ENCODE measurements at regions of chr3 and their contacts with region 1.

Region 1: DNA sequence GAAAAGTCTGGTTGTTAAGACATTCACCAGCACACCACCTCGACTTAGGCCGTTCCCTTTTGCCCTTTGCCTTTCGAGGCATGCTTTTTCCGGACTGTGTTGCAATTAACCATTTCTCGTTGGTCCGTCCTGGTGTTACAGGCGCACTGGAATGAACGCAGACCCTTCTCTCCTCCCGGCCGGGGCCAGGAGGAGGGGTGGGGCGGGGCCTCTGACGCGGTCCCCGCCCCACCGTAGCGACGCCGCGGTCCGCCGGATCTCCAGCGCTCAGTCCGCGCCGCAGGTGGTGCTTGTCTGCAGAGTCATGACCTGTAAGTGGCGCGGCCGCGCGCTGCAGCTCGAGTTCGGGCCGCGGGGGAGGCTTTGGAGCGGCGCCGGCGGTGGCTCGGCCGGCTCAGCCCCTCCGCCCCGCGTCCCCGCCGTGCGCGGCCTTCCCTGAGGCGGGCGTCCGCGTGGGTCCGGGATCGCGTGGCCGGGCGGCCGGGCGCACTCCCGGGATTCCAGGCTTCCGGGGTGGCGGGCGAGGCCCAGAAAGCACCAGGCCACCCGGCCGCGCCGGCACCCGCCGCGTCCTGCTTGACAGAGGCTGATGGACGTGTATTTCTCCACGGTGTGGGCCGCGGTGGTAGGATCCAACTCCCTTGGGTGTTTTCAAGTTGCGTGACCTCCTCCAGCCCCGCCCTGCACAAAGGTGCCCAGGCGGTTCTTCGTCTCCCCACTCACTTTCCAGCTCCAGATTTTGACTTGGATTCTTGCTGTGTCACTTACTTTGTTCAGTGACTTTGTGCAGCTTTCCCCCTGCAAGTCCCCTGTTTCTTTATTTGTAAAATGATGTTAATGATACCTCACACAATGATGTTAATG is at the start of gene NIT2:
- DNase-seq: peak; percentile 85
- ATAC-seq: peak; percentile 95
- H3K4me3 ChIP-seq: peak within 1 kb of the TSS; percentile 70 to 82 (median 78)
- H3K27ac ChIP-seq: peak within 1 kb of the TSS; percentile 79
- H3K4me1 ChIP-seq: peaks cover 50% of the 10 kb centered on the region
- H3K27me3 ChIP-seq: no peaks in the 10 kb centered on the region
- CTCF ChIP-seq: 0 out of 2 replicates have a peak, but pooled peaks have one; percentile 17
- EP300 ChIP-seq: peak in 1 of 2 experiments; percentile 57; a peak in 2 of 4 replicates
- POLR2A ChIP-seq: peak; percentile 87 to 95
- RAD21 ChIP-seq: peak; percentile 68
- total RNA-seq, gene NIT2: 49.1 and 54.3 TPM in 2 replicates

Region 2: DNA sequence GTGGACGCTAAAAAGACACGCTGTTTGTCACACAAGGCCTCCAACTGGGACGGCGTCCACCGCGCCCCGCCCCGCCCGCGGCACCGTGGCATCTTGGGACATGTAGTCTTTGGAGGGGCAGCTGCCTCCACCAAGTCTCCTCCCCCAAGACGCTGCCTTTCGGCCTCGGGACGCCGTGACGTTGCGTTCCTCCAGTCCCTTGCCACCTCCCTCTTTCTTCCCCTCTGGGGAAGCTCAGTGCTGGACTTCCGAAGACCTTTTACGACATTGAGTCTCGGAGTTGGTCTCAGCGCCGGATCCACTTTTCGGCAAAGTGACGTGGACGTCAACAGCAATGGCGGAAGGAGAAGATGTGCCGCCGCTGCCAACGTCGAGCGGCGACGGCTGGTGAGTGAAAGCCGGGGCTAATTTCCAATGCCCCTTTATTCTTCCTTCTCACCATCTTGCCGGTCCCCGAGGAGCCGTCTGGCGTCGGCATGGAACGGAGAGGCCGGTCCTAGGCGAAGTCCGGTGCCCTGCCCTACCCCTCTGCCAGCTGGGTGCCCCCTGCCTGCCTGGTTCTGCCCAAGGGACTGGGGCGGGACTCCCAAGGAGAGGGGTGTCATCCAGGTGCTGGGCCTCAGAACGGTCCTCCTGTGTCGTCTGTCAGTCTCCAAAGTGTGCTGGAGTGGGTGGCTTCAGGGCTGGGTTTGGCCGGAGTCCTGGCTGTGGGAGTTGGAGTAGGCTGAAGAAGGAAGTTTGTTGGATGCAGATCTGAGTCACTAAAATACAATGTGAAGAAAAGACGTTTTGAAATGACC is 73.8 kb before region 1 on chr3 and contains the start of gene TBC1D23:
- CTCF ChIA-PET with region 1: no interaction called
- POLR2A ChIA-PET with region 1: interaction called, 17 read pairs
- in situ Hi-C with region 1: no loop called
- intact Hi-C with region 1: no loop called
- DNase-seq: peak; percentile 97
- ATAC-seq: peak; percentile 97
- H3K4me3 ChIP-seq: peak within 1 kb of the TSS; percentile 95 to 98 (median 98)
- H3K27ac ChIP-seq: peak within 1 kb of the TSS; percentile 87
- H3K4me1 ChIP-seq: peaks cover 60% of the 10 kb centered on the region
- H3K27me3 ChIP-seq: no peaks in the 10 kb centered on the region; a peak in 1 of 5 replicates
- CTCF ChIP-seq: peak; percentile 25
- EP300 ChIP-seq: no peak
- POLR2A ChIP-seq: peak; percentile 67 to 79
- RAD21 ChIP-seq: no peak
- total RNA-seq, gene TBC1D23: 28.7 and 44.5 TPM in 2 replicates

Region 3: DNA sequence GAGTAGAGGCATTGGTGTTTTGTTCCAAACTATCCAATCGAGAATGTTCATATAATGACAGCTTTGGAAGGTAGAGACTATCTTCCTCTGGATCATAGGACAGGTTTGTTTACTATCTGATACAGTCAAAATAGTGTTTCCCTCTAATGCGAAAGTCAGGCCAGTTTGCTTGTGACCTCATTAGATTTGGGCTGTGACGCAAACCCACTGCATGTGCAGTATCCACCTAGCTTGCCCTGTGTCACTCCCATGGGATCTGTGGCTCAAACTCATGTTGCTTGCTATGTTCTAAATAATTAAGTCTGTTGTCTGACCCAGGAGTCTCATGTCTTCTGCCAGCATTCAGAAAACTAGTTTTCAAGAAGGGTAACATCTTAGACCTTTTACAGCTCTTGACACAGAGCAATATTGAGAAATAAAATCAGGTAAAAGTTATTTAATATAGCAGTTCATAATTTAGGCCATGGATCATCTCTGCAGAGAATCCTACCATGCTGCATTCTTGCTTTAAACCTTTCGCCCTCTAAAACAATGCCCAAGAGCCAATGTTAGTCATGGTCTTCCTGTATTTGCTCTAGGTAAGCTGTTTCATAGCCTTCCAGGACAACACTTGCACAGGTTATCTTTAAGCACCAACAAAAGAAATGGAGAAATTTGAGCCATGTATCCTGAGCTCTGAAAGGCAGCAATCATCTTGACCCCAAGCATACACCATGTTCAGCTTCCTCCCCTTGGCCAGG is 26.2 kb after region 1 on chr3:
- CTCF ChIA-PET with region 1: no interaction called
- POLR2A ChIA-PET with region 1: interaction called, 7 read pairs
- in situ Hi-C with region 1: no loop called
- intact Hi-C with region 1: loop called (anchors 1 kb)
- DNase-seq: no peak
- ATAC-seq: peak; percentile 9
- H3K4me3 ChIP-seq: no peak overlapping the region
- H3K27ac ChIP-seq: no peak overlapping the region
- H3K4me1 ChIP-seq: peaks cover 25% of the 10 kb centered on the region
- H3K27me3 ChIP-seq: no peaks in the 10 kb centered on the region
- CTCF ChIP-seq: no peak
- EP300 ChIP-seq: no peak
- POLR2A ChIP-seq: no peak
- RAD21 ChIP-seq: no peak

Measured in HepG2 (cell line).